Activated CD8-positive, alpha-beta memory T cell treated with anti-CD3 and anti-CD28 coated beads, Interleukin-2, amount 10 ng/mL, durations not matched to agents 7 days and 5 days (primary cell): ENCODE measurements at regions of chr14 and their contacts with region 1.

Region 1: DNA sequence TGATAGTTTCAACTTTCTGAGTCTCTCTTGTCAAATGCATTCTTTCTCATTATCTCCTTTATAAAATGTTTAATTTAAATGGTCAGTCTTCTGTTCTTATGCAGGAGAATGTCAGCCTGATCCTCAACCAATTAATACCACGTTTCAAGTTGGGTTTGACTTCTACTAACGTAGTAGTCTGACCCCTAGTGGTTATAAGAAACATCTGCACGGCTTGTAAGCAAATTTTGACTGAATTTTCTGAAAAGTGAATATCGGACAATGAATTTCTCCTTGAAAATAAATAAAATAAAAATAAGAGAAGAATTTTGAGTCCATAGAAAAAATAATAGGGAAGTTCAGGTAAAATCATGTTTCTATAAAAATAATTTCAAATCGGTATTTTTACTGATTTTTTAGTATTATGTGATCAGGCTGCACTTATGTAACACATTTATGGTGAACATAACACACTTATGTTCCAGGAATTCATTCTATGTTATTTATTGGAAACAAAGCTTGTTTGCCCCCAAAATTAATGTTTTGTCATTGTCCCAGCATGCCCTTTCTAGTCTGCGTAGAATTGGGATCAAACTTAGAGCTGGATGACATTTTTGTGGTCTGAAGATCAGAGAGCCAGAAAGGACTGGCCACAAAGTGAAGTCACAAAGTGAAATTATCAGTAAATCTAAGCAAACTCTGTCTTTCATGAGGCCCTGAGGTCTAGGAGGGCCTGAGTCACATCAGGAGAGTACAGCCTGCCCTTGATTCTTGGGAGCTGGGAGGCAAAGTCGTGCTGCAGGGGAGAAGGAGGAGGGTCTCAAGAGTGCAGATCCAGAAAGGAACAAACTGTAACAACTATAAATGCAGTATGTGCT is 101.2 kb upstream of the STXBP6 start:
- DNase-seq: no peak
- ATAC-seq: no peak
- H3K4me3 Mint-ChIP-seq: no peak overlapping the region
- H3K27ac Mint-ChIP-seq: no peak overlapping the region
- H3K4me1 Mint-ChIP-seq: no peaks in the 10 kb centered on the region
- H3K27me3 Mint-ChIP-seq: peaks cover 14% of the 10 kb centered on the region

Region 2: DNA sequence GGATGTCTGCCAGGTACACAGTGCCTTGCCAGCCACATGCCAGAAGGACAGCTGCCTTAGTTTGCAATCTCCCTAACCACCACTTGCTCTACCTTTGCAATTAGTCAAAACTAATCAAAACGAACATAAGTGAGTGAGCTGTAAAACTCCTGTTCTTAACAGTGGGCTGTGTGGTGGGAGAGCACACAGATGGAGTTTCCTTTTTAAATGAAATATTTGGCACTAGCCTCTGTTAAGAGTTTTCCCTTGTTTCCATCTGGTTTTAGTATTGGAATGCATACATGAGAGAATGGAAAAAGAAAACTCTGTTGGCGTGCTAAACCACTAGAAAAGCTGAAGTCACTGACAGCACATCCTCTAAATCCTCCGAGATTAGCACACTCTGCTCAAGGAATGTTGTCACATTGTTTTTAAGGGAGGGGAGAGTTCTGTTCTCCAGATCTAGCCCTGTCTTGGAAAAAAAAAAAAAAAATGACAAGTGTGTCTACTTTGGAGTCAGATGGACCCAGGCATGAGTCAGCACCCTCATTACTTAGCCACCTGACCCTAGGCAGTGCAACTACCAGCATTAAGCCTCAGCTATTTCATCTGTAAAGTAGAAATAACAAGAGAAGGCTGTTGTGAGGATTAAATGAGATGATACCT is 185.1 kb before region 1 on chr14:
- CTCF ChIA-PET with region 1: no interaction called
- DNase-seq: no peak
- ATAC-seq: no peak
- H3K4me3 Mint-ChIP-seq: no peak overlapping the region
- H3K27ac Mint-ChIP-seq: no peak overlapping the region
- H3K4me1 Mint-ChIP-seq: no peaks in the 10 kb centered on the region
- H3K27me3 Mint-ChIP-seq: peaks cover 6% of the 10 kb centered on the region

Region 3: GRCh38 chr14:25132732-25133422 is 18.3 kb before region 1 on chr14:
- CTCF ChIA-PET with region 1: interaction called, 10 read pairs
- DNase-seq: peak; percentile 56
- ATAC-seq: peak; percentile 86
- H3K4me3 Mint-ChIP-seq: no peak overlapping the region
- H3K27ac Mint-ChIP-seq: no peak overlapping the region
- H3K4me1 Mint-ChIP-seq: no peaks in the 10 kb centered on the region
- H3K27me3 Mint-ChIP-seq: peaks cover 34% of the 10 kb centered on the region